PC-3 (cell line): ENCODE measurements at regions of chr13 and their contacts with region 1.

Region 1: GRCh38 chr13:81031996-81032395 is 691.1 kb upstream of the SPRY2 start:
- DNase-seq: no peak
- ATAC-seq: peak; percentile 56
- H3K4me3 ChIP-seq: no peak overlapping the region
- H3K27ac ChIP-seq: no peak overlapping the region
- H3K4me1 ChIP-seq: no peaks in the 10 kb centered on the region
- H3K27me3 ChIP-seq: no peaks in the 10 kb centered on the region
- CTCF ChIP-seq: no peak

Region 2: DNA sequence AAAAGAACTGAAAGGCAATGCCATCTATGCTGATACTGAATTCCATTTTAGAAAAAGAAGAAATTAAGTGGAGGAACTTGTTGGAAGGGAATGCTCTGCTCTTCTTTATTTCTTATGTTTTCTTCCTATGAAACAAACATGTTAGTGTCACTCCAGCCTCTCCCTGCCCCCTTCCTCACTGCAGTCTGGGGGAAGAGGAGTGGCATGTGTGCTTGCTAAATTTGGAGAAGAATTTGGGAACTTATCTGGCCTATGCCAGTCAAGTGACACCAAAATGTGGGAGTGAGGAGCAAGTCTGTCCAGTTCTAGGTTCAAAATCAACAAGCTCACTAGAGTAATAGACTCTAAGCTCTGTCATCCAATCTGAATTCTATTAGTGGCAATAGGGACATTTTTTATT is 1840.5 kb before region 1 on chr13:
- CTCF ChIA-PET with region 1: no interaction called
- POLR2A ChIA-PET with region 1: interaction called, 10 read pairs
- intact Hi-C with region 1: no loop called
- DNase-seq: no peak
- ATAC-seq: no peak
- H3K4me3 ChIP-seq: no peak overlapping the region
- H3K27ac ChIP-seq: no peak overlapping the region
- H3K4me1 ChIP-seq: no peaks in the 10 kb centered on the region
- H3K27me3 ChIP-seq: peaks cover 27% of the 10 kb centered on the region
- CTCF ChIP-seq: no peak